HepG2 (cell line): ENCODE measurements at regions of chr6 and their contacts with region 1.

Region 1: GRCh38 chr6:108728826-108729225 is 119.4 kb upstream of the ARMC2 start:
- DNase-seq: peak; percentile 88
- ATAC-seq: peak; percentile 86
- H3K4me3 ChIP-seq: peak overlapping the region in 1 of 3 experiments; percentile 53; a peak in 2 of 6 replicates
- H3K27ac ChIP-seq: no peak overlapping the region
- H3K4me1 ChIP-seq: peaks cover 63% of the 10 kb centered on the region
- H3K27me3 ChIP-seq: no peaks in the 10 kb centered on the region; a peak in 1 of 5 replicates
- CTCF ChIP-seq: peak; percentile 65
- EP300 ChIP-seq: peak in 1 of 2 experiments; percentile 87; a peak in 2 of 4 replicates
- POLR2A ChIP-seq: no peak
- RAD21 ChIP-seq: peak; percentile 59

Region 2: DNA sequence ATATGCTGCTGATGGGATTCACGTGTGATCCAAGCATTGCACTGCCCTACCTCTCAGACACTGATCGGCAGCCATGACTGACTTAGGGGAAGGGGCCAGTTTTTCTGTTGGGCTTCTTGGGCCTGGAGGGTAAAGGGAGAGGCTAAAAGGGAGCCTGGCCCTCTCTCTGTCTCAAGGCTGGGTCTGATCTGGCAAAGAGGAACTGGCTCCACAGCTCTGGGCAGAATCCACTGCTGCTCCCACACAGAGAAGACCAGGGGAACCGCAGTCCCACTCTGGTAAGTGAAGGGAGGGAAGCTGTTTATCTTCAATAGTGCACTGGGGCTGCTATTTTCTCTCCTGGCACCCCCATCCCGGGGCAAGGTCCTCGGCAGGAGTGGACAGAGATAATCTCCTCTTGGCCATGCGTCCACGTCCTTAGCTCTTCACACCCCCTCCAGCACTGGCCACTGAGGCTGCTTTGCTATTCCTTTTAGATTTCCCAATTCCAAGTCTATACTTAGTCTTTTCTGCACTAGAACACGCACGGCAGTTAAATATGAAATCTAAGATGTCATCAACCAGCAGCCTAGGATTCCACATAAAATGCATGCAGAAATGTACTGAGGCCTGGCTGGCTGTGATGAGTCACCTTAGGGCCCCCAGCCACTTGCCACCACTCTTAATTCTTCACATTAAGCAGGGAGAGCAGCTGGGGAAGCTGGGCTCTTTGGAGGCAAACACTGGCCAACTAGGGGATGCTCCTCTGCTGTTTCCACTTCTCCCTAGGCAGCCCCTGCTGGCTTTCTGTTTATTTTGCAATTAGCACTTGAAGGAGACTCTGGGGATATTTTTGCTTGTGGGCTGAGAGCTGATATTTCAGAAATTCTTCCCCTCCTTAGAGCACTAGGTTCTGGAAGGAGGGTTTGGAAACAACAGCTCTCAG is 31.6 kb after region 1 on chr6:
- CTCF ChIA-PET with region 1: no interaction called
- POLR2A ChIA-PET with region 1: no interaction called
- in situ Hi-C with region 1: no loop called
- intact Hi-C with region 1: loop called (anchors 5 kb)
- DNase-seq: no peak
- ATAC-seq: no peak
- H3K4me3 ChIP-seq: no peak overlapping the region
- H3K27ac ChIP-seq: no peak overlapping the region
- H3K4me1 ChIP-seq: peaks cover 84% of the 10 kb centered on the region
- H3K27me3 ChIP-seq: no peaks in the 10 kb centered on the region
- CTCF ChIP-seq: no peak
- EP300 ChIP-seq: no peak
- POLR2A ChIP-seq: no peak
- RAD21 ChIP-seq: no peak

Region 3: GRCh38 chr6:109095027-109095834 is 366.4 kb after region 1 on chr6 and contains the start of gene CEP57L1:
- CTCF ChIA-PET with region 1: no interaction called
- POLR2A ChIA-PET with region 1: no interaction called
- in situ Hi-C with region 1: no loop called
- intact Hi-C with region 1: no loop called
- DNase-seq: peak; percentile 93
- ATAC-seq: peak; percentile 81
- H3K4me3 ChIP-seq: peak within 1 kb of the TSS; percentile 74 to 98 (median 89)
- H3K27ac ChIP-seq: peak within 1 kb of the TSS; percentile 96
- H3K4me1 ChIP-seq: peaks cover 45% of the 10 kb centered on the region
- H3K27me3 ChIP-seq: no peaks in the 10 kb centered on the region; a peak in 1 of 5 replicates
- CTCF ChIP-seq: no peak
- EP300 ChIP-seq: no peak
- POLR2A ChIP-seq: peak; percentile 52 to 87; a peak in 3 of 4 replicates
- RAD21 ChIP-seq: no peak
- total RNA-seq, gene CEP57L1: 15.5 and 20.7 TPM in 2 replicates